ENCODE measurements at regions of chr20 and their contacts with region 1.

Region 1: DNA sequence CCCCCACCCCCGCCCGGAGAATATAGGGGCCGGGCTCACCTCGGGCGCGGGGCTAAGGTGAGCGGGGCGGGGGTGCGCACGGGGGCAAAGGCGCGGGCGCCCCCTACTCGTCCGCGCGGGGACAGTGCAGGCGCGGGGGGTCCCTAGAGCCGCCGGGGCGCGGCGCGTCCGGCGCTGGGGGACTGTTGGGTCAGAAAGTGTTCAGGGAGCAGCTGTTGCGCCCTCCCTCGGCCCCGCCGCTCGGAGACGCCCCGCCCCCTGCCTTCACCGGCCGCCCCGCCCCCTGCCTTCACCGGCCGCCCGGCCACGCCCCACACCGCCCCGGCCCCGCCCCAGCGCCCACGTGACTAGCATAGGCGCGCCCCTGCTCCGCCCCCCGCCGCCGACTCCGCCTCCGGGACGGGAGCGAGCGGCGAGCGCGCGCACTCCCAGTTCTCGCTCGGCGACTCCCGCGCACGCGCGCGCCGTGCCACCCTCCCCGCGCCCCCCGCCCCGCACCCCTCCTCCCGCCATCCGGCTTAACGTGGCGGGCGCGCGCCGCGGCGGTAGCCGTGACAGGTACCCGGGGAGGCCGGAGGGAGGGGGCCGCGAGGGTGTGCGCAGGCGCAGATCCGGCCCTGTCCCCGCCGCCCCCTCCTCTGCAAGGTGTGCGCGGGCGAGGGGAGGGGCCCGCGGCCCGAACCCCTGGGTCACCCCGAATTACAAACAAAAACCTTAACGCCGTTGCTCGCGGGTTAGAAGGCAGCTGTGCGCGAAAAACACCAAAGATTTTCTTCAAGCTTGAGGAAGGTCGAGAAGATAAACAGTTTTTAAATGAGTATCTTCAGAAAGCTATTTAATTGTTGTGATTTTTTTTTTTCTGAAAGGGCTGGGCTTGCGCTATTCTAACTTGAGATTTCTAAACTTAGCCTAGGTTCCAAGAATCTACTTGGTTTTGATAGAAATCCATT is 704 bp upstream of the ZNF217 start:
- DNase-seq: peak; percentile 98
- H3K4me3 ChIP-seq: peak overlapping the region; percentile 56
- H3K27ac ChIP-seq: peak overlapping the region; percentile 92
- H3K4me1 ChIP-seq: no peaks in the 10 kb centered on the region
- H3K27me3 ChIP-seq: no peaks in the 10 kb centered on the region
- CTCF ChIP-seq: no peak

Region 2: GRCh38 chr20:53643031-53643832 is 48.9 kb after region 1 on chr20:
- intact Hi-C with region 1: loop called (anchors 10 kb)
- DNase-seq: peak; percentile 67
- H3K4me3 ChIP-seq: no peak overlapping the region
- H3K27ac ChIP-seq: peak overlapping the region; percentile 88
- H3K4me1 ChIP-seq: peaks cover 6% of the 10 kb centered on the region
- H3K27me3 ChIP-seq: no peaks in the 10 kb centered on the region
- CTCF ChIP-seq: no peak

Measured in colonic mucosa (tissue), 4 donors.